Naive thymus-derived CD4-positive, alpha-beta T cell (primary cell): ENCODE measurements at regions of chr17 and their contacts with region 1.

Region 1: GRCh38 chr17:29931231-29931932 is 1.4 kb upstream of the SSH2 start:
- DNase-seq: peak; percentile 29 to 89 (median 78)
- ATAC-seq: peak; percentile 84
- H3K4me3 ChIP-seq: peak overlapping the region; percentile 81
- H3K4me3 Mint-ChIP-seq: no peak overlapping the region
- H3K27ac ChIP-seq: peak overlapping the region; percentile 85
- H3K27ac Mint-ChIP-seq: no peak overlapping the region
- H3K4me1 ChIP-seq: peaks cover 13 to 25% of the 10 kb centered on the region in 2 donors
- H3K4me1 Mint-ChIP-seq: peaks cover 24 to 35% (median 27%) of the 10 kb centered on the region in 7 donors
- H3K27me3 ChIP-seq: no peaks in the 10 kb centered on the region
- H3K27me3 Mint-ChIP-seq: peaks cover 0 to 2% (median 0%) of the 10 kb centered on the region in 5 donors

Region 2: GRCh38 chr17:29568331-29569244 is 362.8 kb before region 1 on chr17 and contains the start of gene TP53I13:
- CTCF ChIA-PET with region 1: interaction called, 5 read pairs
- POLR2A ChIA-PET with region 1: interaction called, 4 read pairs
- intact Hi-C with region 1: loop called (anchors 1 to 5 kb)
- DNase-seq: peak; percentile 65 to 90 (median 81)
- ATAC-seq: peak; percentile 81
- H3K4me3 ChIP-seq: peak within 1 kb of the TSS; percentile 89
- H3K4me3 Mint-ChIP-seq: peak within 1 kb of the TSS; percentile 88 to 99 (median 95)
- H3K27ac ChIP-seq: peak within 1 kb of the TSS; percentile 78
- H3K27ac Mint-ChIP-seq: peak within 1 kb of the TSS; percentile 82 to 97 (median 92)
- H3K4me1 ChIP-seq: peaks cover 12 to 30% of the 10 kb centered on the region in 2 donors
- H3K4me1 Mint-ChIP-seq: peaks cover 21 to 42% (median 32%) of the 10 kb centered on the region in 7 donors
- H3K27me3 ChIP-seq: no peaks in the 10 kb centered on the region
- H3K27me3 Mint-ChIP-seq: no peaks in the 10 kb centered on the region
- total RNA-seq, gene TP53I13: 61.6 to 87.5 (median 62.8) TPM

Region 3: GRCh38 chr17:29617125-29617480 is 314.3 kb before region 1 on chr17:
- CTCF ChIA-PET with region 1: interaction called, 11 read pairs
- POLR2A ChIA-PET with region 1: interaction called, 9 read pairs
- intact Hi-C with region 1: loop called (anchors 1 kb)
- DNase-seq: peak; percentile 77 to 91 (median 88)
- ATAC-seq: peak; percentile 80
- H3K4me3 ChIP-seq: peak overlapping the region; percentile 80
- H3K4me3 Mint-ChIP-seq: peak overlapping the region; percentile 78 to 93 (median 88)
- H3K27ac ChIP-seq: peak overlapping the region; percentile 38
- H3K27ac Mint-ChIP-seq: peak overlapping the region in 7 of 9 donors; percentile 2 to 91 (median 72)
- H3K4me1 ChIP-seq: peaks cover 36 to 42% of the 10 kb centered on the region in 2 donors
- H3K4me1 Mint-ChIP-seq: peaks cover 13 to 55% (median 38%) of the 10 kb centered on the region in 7 donors
- H3K27me3 ChIP-seq: no peaks in the 10 kb centered on the region
- H3K27me3 Mint-ChIP-seq: peaks cover 0 to 21% (median 0%) of the 10 kb centered on the region in 5 donors

Region 4: DNA sequence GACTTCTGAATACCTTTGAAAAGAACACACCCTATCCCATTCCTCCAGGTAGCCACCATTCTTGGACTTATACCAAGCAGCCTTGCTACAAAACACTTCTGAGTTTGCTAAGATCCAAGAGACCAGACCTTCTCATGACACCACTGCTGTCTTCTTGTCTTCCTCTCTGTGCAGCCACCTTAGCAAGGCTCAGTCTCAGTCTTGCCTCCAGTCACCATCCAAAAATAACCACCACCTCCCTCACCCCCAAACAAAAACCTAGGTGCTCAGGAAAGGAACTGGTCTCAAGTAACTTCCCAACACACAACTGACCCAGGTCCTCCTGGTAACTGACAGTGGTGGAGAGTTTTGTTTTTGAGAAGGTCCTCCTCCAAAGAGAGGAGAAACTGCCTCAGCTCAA is 217.8 kb before region 1 on chr17:
- CTCF ChIA-PET with region 1: no interaction called
- POLR2A ChIA-PET with region 1: no interaction called
- intact Hi-C with region 1: no loop called
- DNase-seq: no peak
- ATAC-seq: no peak
- H3K4me3 ChIP-seq: no peak overlapping the region
- H3K4me3 Mint-ChIP-seq: peak overlapping the region in 8 of 10 donors; percentile 1 to 64 (median 23)
- H3K27ac ChIP-seq: peak overlapping the region; percentile 9
- H3K27ac Mint-ChIP-seq: peak overlapping the region; percentile 44 to 96 (median 86)
- H3K4me1 ChIP-seq: peaks cover 9 to 18% of the 10 kb centered on the region in 2 donors
- H3K4me1 Mint-ChIP-seq: peaks cover 51 to 99% (median 90%) of the 10 kb centered on the region in 7 donors
- H3K27me3 ChIP-seq: no peaks in the 10 kb centered on the region
- H3K27me3 Mint-ChIP-seq: no peaks in the 10 kb centered on the region

Region 5: DNA sequence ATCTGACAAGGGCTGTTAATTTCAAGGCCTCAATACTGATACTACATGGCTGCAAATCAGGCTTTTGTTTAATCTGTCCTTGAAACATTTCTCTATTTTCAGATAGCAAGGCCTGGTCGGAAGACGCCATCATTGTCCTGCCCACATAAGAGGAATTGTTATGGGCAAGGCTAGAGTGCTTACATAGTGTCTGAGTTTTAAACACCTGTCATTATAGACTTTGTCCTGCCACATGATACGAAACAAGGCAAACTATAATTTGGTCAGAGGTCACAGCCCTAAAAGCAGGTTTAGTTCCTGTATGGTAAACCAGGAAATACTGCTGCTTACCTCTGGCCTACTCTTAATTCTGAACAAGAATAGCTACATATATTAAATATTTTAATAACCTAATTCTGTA is 105.8 kb before region 1 on chr17:
- CTCF ChIA-PET with region 1: interaction called, 6 read pairs
- POLR2A ChIA-PET with region 1: interaction called, 4 read pairs
- intact Hi-C with region 1: loop called (anchors 1 to 5 kb)
- DNase-seq: no peak
- ATAC-seq: no peak
- H3K4me3 ChIP-seq: no peak overlapping the region
- H3K4me3 Mint-ChIP-seq: no peak overlapping the region
- H3K27ac ChIP-seq: no peak overlapping the region
- H3K27ac Mint-ChIP-seq: peak overlapping the region in 2 of 9 donors; percentile 18 to 72
- H3K4me1 ChIP-seq: peaks cover 0 to 16% of the 10 kb centered on the region in 2 donors
- H3K4me1 Mint-ChIP-seq: peaks cover 6 to 56% (median 44%) of the 10 kb centered on the region in 7 donors
- H3K27me3 ChIP-seq: no peaks in the 10 kb centered on the region
- H3K27me3 Mint-ChIP-seq: no peaks in the 10 kb centered on the region

Region 6: DNA sequence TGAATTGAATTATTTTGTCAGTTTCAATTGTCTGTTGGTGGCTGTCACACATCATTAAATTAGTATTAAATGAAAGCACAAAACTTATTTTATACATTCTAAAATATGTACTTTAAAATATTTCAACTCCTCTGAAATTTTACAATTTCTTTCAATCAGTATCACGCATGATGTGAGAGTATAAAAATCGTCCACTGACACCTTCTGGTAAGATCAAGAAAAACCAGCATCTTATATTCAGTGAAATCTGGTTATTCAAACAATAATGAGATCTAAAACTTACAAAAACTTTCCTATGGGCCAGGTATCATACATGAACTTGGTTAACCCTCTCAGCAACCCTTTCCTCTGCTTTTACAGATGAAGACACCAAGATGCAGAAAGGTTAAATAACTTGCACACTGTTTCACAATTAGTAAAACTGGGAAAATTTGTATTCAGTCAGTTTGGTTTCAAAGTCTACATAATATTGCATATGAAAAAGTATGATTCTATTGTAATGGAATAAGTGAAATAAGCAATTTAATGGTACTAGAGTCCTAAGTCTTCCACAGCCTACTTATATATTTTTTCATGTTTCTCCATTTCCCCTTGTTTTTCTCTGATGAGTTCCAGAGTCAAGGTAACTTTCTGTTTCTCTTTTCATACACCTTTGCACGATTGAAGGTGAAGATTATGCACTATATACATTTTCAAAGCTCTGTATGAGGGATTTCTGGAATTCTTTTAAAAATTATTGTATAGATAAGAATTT is 68.8 kb after region 1 on chr17:
- CTCF ChIA-PET with region 1: interaction called, 7 read pairs
- POLR2A ChIA-PET with region 1: no interaction called
- intact Hi-C with region 1: loop called in 1 of 2 experiments (anchors 1 kb)
- DNase-seq: peak in 2 of 9 donors; percentile 1 to 5
- ATAC-seq: no peak
- H3K4me3 ChIP-seq: no peak overlapping the region
- H3K4me3 Mint-ChIP-seq: peak overlapping the region in 9 of 10 donors; percentile 18 to 79 (median 56)
- H3K27ac ChIP-seq: no peak overlapping the region
- H3K27ac Mint-ChIP-seq: peak overlapping the region in 7 of 9 donors; percentile 12 to 81 (median 32)
- H3K4me1 ChIP-seq: no peaks in the 10 kb centered on the region
- H3K4me1 Mint-ChIP-seq: peaks cover 5 to 14% (median 13%) of the 10 kb centered on the region in 7 donors
- H3K27me3 ChIP-seq: no peaks in the 10 kb centered on the region
- H3K27me3 Mint-ChIP-seq: peaks cover 0 to 6% (median 0%) of the 10 kb centered on the region in 5 donors

Region 7: GRCh38 chr17:30031214-30031869 is 100.0 kb after region 1 on chr17:
- CTCF ChIA-PET with region 1: no interaction called
- POLR2A ChIA-PET with region 1: no interaction called
- intact Hi-C with region 1: no loop called
- DNase-seq: peak in 4 of 9 donors; percentile 1 to 9 (median 5)
- ATAC-seq: peak; percentile 49
- H3K4me3 ChIP-seq: no peak overlapping the region
- H3K4me3 Mint-ChIP-seq: no peak overlapping the region
- H3K27ac ChIP-seq: no peak overlapping the region
- H3K27ac Mint-ChIP-seq: no peak overlapping the region
- H3K4me1 ChIP-seq: no peaks in the 10 kb centered on the region
- H3K4me1 Mint-ChIP-seq: no peaks in the 10 kb centered on the region
- H3K27me3 ChIP-seq: no peaks in the 10 kb centered on the region
- H3K27me3 Mint-ChIP-seq: peaks cover 0 to 25% (median 0%) of the 10 kb centered on the region in 5 donors

Region 8: GRCh38 chr17:30101686-30102390 is 170.5 kb after region 1 on chr17:
- CTCF ChIA-PET with region 1: no interaction called
- POLR2A ChIA-PET with region 1: no interaction called
- intact Hi-C with region 1: no loop called
- DNase-seq: no peak
- ATAC-seq: no peak
- H3K4me3 ChIP-seq: no peak overlapping the region
- H3K4me3 Mint-ChIP-seq: no peak overlapping the region
- H3K27ac ChIP-seq: no peak overlapping the region
- H3K27ac Mint-ChIP-seq: no peak overlapping the region
- H3K4me1 ChIP-seq: peaks cover 0 to 7% of the 10 kb centered on the region in 2 donors
- H3K4me1 Mint-ChIP-seq: peaks cover 5 to 7% (median 6%) of the 10 kb centered on the region in 7 donors
- H3K27me3 ChIP-seq: no peaks in the 10 kb centered on the region
- H3K27me3 Mint-ChIP-seq: peaks cover 5 to 23% (median 9%) of the 10 kb centered on the region in 5 donors

Region 9: DNA sequence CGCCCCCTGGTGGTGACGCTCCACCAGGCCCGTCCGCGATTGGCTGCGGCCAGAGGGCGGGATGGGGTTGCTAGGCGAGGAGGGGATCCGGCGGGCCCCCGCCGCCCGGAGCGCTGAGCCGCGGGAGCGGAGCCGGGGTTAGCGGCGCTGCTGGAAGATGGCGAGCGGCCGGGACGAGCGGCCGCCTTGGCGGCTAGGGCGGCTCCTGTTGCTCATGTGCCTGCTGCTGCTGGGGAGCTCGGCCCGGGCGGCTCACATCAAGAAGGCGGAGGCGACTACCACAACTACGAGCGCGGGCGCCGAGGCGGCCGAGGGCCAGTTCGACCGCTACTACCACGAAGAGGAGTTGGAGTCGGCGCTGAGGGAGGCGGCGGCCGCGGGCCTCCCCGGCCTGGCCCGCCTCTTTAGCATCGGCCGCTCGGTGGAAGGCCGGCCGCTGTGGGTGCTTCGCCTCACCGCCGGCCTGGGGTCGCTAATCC is 447.5 kb after region 1 on chr17 and contains the start of gene CPD:
- CTCF ChIA-PET with region 1: no interaction called
- POLR2A ChIA-PET with region 1: no interaction called
- intact Hi-C with region 1: loop called in 1 of 2 experiments (anchors 1 kb)
- DNase-seq: peak; percentile 93 to 99 (median 97)
- ATAC-seq: peak; percentile 98
- H3K4me3 ChIP-seq: peak within 1 kb of the TSS; percentile 76
- H3K4me3 Mint-ChIP-seq: peak within 1 kb of the TSS; percentile 90 to 99 (median 94)
- H3K27ac ChIP-seq: peak within 1 kb of the TSS; percentile 81
- H3K27ac Mint-ChIP-seq: peak within 1 kb of the TSS; percentile 89 to 98 (median 94)
- H3K4me1 ChIP-seq: peaks cover 20 to 50% of the 10 kb centered on the region in 2 donors
- H3K4me1 Mint-ChIP-seq: peaks cover 36 to 65% (median 55%) of the 10 kb centered on the region in 7 donors
- H3K27me3 ChIP-seq: no peaks in the 10 kb centered on the region
- H3K27me3 Mint-ChIP-seq: no peaks in the 10 kb centered on the region
- total RNA-seq, gene CPD: 16.5 to 52.9 (median 22.6) TPM